ENCODE measurements at regions of chr2 and their contacts with region 1.

Region 1: GRCh38 chr2:219029829-219030165 is 11.5 kb downstream of the CFAP65 start:
- DNase-seq: peak; percentile 66 to 86
- H3K4me3 ChIP-seq: no peak overlapping the region
- H3K4me1 ChIP-seq: no peaks in the 10 kb centered on the region
- H3K27me3 ChIP-seq: peaks cover 11% of the 10 kb centered on the region; the same call in 1 of the 2 replicates

Region 2: GRCh38 chr2:219119422-219120043 is 89.7 kb after region 1 on chr2:
- in situ Hi-C with region 1: no loop called
- DNase-seq: peak; percentile 47 to 83
- H3K4me3 ChIP-seq: no peak overlapping the region
- H3K4me1 ChIP-seq: no peaks in the 10 kb centered on the region; the same call in 1 of the 2 replicates
- H3K27me3 ChIP-seq: no peaks in the 10 kb centered on the region

Region 3: GRCh38 chr2:219149667-219150066 is 119.9 kb after region 1 on chr2:
- in situ Hi-C with region 1: loop called (anchors 5 kb)
- DNase-seq: no peak
- H3K4me3 ChIP-seq: no peak overlapping the region
- H3K4me1 ChIP-seq: no peaks in the 10 kb centered on the region
- H3K27me3 ChIP-seq: no peaks in the 10 kb centered on the region